Activated CD4-positive, alpha-beta memory T cell treated with anti-CD3 and anti-CD28 coated beads for 36 hours (primary cell): ENCODE measurements at regions of chr13 and their contacts with region 1.

Region 1: DNA sequence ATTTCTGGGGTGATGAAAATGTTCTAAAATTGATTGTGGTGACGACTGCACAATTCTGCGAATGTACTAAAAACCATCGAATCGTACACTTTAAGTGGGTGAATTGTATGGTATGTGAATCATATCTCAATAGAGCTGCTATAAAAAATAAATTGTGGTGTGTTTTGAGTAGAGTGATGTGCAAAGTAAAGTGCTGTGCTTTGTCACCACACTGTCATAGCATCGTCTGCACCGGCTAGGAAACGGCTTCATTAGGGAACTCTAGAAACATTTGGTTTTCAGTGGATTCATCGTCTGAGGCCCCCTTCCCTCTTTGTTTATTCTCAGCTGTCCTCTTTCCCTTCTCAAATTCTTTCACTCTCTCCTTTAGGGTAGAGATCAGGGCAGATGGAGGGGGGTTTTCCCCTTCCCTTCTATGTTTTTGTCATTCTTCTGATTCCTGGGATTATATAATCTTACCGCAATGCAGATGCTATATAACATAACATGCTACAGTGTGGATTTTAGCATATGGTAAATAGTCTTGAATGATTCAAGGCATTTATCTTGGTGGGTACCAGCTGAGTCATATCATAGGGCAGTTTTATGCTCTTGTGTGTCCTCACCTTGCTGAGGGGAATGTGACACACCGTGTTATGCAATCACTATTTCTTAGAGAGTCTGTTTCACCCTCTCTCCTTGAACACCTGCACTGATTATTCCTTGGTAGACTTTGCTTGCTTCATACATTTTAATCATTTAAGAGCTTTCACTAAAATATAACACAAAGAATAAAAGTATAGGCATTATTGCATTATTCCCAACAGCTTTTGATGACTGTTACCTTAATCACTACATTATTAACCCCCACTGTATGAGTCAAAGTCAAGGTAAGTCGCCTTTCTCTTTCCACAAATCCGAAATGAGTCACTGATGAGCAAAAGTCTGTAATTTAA is 239.4 kb downstream of the DCLK1 start:
- DNase-seq: no peak
- H3K4me3 Mint-ChIP-seq: no peak overlapping the region
- H3K27ac Mint-ChIP-seq: no peak overlapping the region
- H3K4me1 Mint-ChIP-seq: no peaks in the 10 kb centered on the region
- H3K27me3 Mint-ChIP-seq: no peaks in the 10 kb centered on the region

Region 2: GRCh38 chr13:35879109-35879508 is 12.7 kb before region 1 on chr13:
- CTCF ChIA-PET with region 1: no interaction called
- POLR2A ChIA-PET with region 1: interaction called, 10 read pairs
- intact Hi-C with region 1: no loop called
- DNase-seq: no peak
- H3K4me3 Mint-ChIP-seq: no peak overlapping the region
- H3K27ac Mint-ChIP-seq: no peak overlapping the region
- H3K4me1 Mint-ChIP-seq: no peaks in the 10 kb centered on the region
- H3K27me3 Mint-ChIP-seq: no peaks in the 10 kb centered on the region